Dendritic cell treated with granulocyte-macrophage colony-stimulating factor and Interleukin-4, amounts not matched to agents 40 ng/mL and 50 ng/mL, for 4 days (primary cell): ENCODE measurements at regions of chr7 and their contacts with region 1.

Region 1: GRCh38 chr7:12686894-12687717 is at the start of gene ARL4A:
- H3K4me3 Mint-ChIP-seq: peak within 1 kb of the TSS; percentile 95
- H3K27ac Mint-ChIP-seq: peak within 1 kb of the TSS; percentile 97
- H3K4me1 Mint-ChIP-seq: peaks cover 43% of the 10 kb centered on the region
- H3K27me3 Mint-ChIP-seq: no peaks in the 10 kb centered on the region

Region 2: GRCh38 chr7:12584930-12585329 is 102.2 kb before region 1 on chr7:
- intact Hi-C with region 1: loop called (anchors 10 kb)
- H3K4me3 Mint-ChIP-seq: peak overlapping the region; percentile 17
- H3K27ac Mint-ChIP-seq: peak overlapping the region; percentile 61
- H3K4me1 Mint-ChIP-seq: peaks cover 21% of the 10 kb centered on the region
- H3K27me3 Mint-ChIP-seq: peaks cover 2% of the 10 kb centered on the region

Region 3: DNA sequence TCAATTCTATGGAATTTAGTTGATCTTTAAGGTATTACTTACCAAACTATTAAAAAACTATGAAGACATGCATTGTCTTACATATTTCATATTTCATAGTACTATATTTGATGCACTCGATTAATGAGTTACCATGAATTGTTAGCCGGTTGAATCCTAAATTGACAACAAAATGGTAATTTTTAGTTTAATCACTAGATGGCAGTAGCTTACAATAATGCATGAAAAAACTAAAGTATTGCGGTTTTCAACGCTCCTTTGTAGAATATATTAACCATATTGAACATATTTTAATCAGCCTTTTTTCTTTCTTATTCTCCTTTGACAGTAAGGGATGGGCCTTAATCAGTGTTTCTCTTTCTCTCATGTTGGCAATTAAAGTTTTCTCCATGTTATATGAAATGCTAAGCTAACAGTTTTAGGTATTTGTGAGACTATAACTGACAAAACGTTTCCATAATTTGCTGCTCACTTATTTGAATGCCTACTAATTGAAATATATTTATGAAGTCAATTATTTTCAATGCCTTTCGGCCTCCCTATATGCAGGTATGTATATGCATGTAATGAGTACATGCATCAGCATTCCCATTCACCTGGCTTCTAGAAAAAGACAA is 48.1 kb before region 1 on chr7:
- intact Hi-C with region 1: loop called (anchors 5 kb)
- H3K4me3 Mint-ChIP-seq: no peak overlapping the region
- H3K27ac Mint-ChIP-seq: no peak overlapping the region
- H3K4me1 Mint-ChIP-seq: peaks cover 11% of the 10 kb centered on the region
- H3K27me3 Mint-ChIP-seq: no peaks in the 10 kb centered on the region

Region 4: DNA sequence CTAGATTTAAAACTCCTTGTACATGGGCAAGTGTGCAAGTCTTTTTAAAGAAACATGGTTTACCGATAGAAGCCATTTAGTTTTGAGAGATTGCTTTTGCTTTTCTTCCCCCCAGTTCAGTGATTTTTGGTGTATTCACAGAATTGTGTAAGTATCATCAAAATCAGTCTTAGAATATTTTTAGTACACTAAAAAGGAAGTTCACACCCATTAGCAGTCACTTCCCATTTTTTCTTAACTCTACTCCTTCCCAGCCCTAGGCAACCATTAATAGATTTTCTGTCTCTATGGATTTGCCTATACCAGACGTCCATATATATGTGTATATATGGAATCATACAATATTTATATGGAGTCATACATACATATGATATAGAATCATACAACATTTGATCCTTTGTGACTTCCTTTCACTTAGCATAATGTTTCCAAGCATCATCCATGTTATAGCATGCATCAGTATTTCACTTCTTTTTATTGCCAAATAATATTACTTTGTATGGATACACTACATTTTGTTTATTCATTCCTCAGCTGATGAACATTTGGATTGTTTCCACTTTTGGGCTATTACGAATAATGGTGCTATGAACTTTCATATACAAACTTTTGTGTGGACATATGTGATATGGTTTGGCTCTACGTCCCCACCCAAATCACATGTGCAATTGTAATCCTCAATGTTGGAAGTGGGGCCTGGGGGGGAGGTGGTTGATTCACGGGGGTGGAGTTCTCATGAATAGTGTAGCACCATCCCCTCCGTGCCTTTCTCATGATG is 16.2 kb before region 1 on chr7:
- intact Hi-C with region 1: loop called (anchors 1 kb)
- H3K4me3 Mint-ChIP-seq: no peak overlapping the region
- H3K27ac Mint-ChIP-seq: peak overlapping the region; percentile 44
- H3K4me1 Mint-ChIP-seq: peaks cover 27% of the 10 kb centered on the region
- H3K27me3 Mint-ChIP-seq: no peaks in the 10 kb centered on the region

Region 5: DNA sequence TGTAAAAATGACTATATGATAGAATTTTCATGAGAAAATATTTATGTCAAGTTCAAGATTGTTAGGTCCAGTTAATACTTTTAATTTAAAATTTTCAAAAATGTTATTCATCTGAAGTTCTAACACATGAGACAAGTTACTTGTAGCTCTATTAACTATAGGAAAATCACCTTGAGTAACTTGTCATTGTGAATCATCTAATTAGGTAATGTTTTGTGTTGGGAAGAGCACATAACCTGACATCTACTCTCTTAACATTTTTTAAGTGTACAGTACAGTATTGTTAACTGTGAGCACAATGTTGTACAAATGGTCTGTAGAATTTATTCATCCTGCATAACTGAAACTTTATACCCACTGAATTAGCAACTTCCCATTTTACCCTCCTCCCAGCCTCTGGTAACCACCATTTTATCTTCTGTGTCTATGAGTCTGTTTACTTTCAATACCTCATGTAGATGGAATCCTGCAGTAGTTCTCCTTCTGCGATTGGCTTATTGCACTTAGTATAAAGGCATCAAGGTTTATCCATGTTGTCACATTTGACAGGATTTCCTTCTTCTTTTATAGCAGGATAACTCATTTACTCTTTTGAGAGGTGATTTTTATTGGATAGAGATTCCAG is 55.0 kb after region 1 on chr7:
- intact Hi-C with region 1: no loop called
- H3K4me3 Mint-ChIP-seq: no peak overlapping the region
- H3K27ac Mint-ChIP-seq: no peak overlapping the region
- H3K4me1 Mint-ChIP-seq: no peaks in the 10 kb centered on the region
- H3K27me3 Mint-ChIP-seq: no peaks in the 10 kb centered on the region

Region 6: DNA sequence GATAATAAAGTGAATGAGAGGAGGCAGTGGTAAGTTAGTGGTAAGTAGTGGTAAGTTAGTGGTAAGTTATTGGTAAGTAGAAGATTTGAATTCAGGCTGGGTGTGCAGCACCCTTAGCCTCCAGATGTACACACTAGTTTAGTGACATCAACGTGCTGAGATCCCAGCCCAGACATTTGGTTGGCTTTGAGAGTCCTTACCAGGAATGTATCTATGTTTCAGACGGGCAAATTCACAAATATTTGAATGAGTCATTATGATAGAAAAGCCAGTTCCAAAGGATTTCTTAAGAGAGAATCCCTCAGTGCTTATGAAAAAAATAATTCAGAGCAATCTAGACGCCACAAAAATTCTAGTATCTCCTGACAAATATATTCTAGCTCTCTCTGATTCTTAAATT is 70.3 kb after region 1 on chr7:
- intact Hi-C with region 1: no loop called
- H3K4me3 Mint-ChIP-seq: no peak overlapping the region
- H3K27ac Mint-ChIP-seq: no peak overlapping the region
- H3K4me1 Mint-ChIP-seq: peaks cover 16% of the 10 kb centered on the region
- H3K27me3 Mint-ChIP-seq: no peaks in the 10 kb centered on the region

Region 7: GRCh38 chr7:12814107-12814506 is 127.0 kb after region 1 on chr7:
- intact Hi-C with region 1: loop called (anchors 5 kb)
- H3K4me3 Mint-ChIP-seq: no peak overlapping the region
- H3K27ac Mint-ChIP-seq: no peak overlapping the region
- H3K4me1 Mint-ChIP-seq: peaks cover 19% of the 10 kb centered on the region
- H3K27me3 Mint-ChIP-seq: no peaks in the 10 kb centered on the region

Region 8: GRCh38 chr7:13057462-13058200 is 370.5 kb after region 1 on chr7:
- intact Hi-C with region 1: loop called (anchors 10 kb)
- H3K4me3 Mint-ChIP-seq: peak overlapping the region; percentile 65
- H3K27ac Mint-ChIP-seq: peak overlapping the region; percentile 68
- H3K4me1 Mint-ChIP-seq: peaks cover 17% of the 10 kb centered on the region
- H3K27me3 Mint-ChIP-seq: no peaks in the 10 kb centered on the region

Region 9: GRCh38 chr7:13262929-13263530 is 575.9 kb after region 1 on chr7:
- intact Hi-C with region 1: loop called (anchors 5 kb)
- H3K4me3 Mint-ChIP-seq: no peak overlapping the region
- H3K27ac Mint-ChIP-seq: no peak overlapping the region
- H3K4me1 Mint-ChIP-seq: no peaks in the 10 kb centered on the region
- H3K27me3 Mint-ChIP-seq: peaks cover 2% of the 10 kb centered on the region